Kidney (tissue), 22 donors: ENCODE measurements at regions of chr16 and their contacts with region 1.

Region 1: GRCh38 chr16:23629516-23629915 is 11.6 kb downstream of the PALB2 start:
- DNase-seq: no peak
- H3K4me3 ChIP-seq: no peak overlapping the region
- H3K27ac ChIP-seq: no peak overlapping the region
- H3K4me1 ChIP-seq: no peaks in the 10 kb centered on the region
- H3K27me3 ChIP-seq: no peaks in the 10 kb centered on the region
- CTCF ChIP-seq: no peak

Region 2: GRCh38 chr16:23564575-23565363 is 64.7 kb before region 1 on chr16:
- intact Hi-C with region 1: loop called (anchors 10 kb)
- DNase-seq: no peak
- H3K4me3 ChIP-seq: no peak overlapping the region
- H3K27ac ChIP-seq: no peak overlapping the region
- H3K4me1 ChIP-seq: no peaks in the 10 kb centered on the region
- H3K27me3 ChIP-seq: no peaks in the 10 kb centered on the region
- CTCF ChIP-seq: no peak

Region 3: DNA sequence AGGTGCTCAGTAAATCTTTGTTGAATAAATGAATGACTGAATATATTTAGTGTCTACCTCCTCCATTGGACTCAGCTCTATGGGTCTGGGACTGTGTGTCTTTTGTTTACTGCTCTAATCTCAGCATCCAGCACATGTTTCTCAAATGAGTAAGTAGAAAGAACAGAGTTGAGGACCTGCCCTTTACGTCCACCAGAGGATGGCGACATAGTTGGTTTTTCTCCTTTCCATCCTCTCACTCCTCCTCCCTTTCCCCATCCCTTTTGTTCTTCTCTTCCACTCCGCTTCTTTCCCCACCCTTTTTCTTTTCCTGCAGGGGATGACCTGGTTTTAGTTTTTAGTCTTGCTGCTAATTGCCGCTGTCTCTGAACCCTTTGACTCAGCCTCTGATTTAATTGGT is 113.2 kb after region 1 on chr16:
- intact Hi-C with region 1: no loop called
- DNase-seq: no peak
- H3K4me3 ChIP-seq: no peak overlapping the region
- H3K27ac ChIP-seq: no peak overlapping the region
- H3K4me1 ChIP-seq: no peaks in the 10 kb centered on the region
- H3K27me3 ChIP-seq: no peaks in the 10 kb centered on the region
- CTCF ChIP-seq: no peak